PC-9 (cell line): ENCODE measurements at regions of chr2 and their contacts with region 1.

Region 1: GRCh38 chr2:201040867-201041628 is 30.4 kb downstream of the HYCC2 start:
- DNase-seq: no peak
- H3K4me3 ChIP-seq: no peak overlapping the region
- H3K27ac ChIP-seq: no peak overlapping the region
- H3K4me1 ChIP-seq: no peaks in the 10 kb centered on the region
- H3K27me3 ChIP-seq: no peaks in the 10 kb centered on the region
- CTCF ChIP-seq: no peak

Region 2: DNA sequence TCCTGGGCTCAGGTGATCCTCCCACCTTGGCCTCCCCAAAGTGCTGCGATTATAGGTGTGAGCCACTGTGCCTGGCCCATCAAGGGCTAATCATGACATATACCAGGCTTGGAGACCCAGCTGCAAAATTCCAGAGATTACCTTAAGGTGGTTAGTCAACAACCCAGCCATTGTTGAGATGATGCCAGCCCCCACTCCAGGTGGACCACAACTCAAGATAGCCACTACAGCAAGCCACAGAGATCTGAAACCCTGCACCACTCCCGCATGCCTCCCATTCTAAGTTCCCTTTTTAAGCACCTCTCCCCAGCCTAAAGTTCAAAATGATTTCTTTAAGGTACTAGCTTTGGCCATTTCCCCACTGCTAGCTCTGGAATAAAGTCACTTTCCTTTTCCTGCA is 172.0 kb before region 1 on chr2:
- CTCF ChIA-PET with region 1: no interaction called
- POLR2A ChIA-PET with region 1: no interaction called
- intact Hi-C with region 1: no loop called
- DNase-seq: no peak
- H3K4me3 ChIP-seq: no peak overlapping the region
- H3K27ac ChIP-seq: no peak overlapping the region
- H3K4me1 ChIP-seq: no peaks in the 10 kb centered on the region; the same call in 1 of the 2 replicates
- H3K27me3 ChIP-seq: no peaks in the 10 kb centered on the region
- CTCF ChIP-seq: no peak

Region 3: DNA sequence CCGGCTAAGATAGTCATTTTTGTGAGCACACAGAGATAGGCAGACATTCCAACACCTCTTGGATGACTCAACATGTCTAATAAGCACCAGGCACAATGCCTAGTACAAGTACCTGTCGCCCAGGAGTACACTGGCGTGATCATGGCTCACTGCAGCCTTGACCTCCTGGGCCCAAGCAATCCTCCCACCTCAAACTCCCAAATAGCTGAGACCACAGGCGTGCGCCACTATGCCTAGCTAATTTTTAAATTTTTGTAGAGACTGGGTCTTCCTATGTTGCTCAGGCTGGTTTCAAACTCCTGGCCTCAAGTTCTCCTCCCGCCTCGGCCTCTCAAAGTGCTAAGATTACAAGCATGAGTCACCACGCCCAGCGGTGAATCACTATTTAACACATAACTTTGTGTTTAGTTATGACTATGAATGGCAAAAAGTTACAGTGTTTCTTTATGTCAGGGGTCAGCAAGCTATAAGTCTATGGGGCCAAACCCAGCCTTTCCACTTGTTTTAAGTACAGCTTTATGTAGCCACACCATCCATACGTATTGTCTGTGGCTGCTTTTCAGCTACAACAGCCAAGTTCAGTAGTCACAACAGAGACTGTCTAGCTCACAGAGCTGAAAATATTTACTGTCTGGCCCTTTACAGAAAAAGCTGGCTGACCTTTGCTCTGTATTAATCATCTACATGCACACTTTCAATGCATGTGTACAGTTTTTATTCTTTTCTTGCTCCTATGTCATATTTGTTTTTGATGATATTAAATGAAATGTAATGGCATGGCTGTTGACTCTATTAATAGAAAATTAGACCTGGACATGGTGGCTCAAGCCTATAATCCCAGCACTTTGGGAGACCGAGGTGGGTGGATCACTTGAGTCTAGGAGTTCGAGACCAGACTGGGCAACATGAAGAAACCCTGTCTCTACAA is 96.3 kb before region 1 on chr2:
- CTCF ChIA-PET with region 1: interaction called, 10 read pairs
- POLR2A ChIA-PET with region 1: interaction called, 3 read pairs
- intact Hi-C with region 1: no loop called
- DNase-seq: peak; percentile 62 to 92
- H3K4me3 ChIP-seq: no peak overlapping the region
- H3K27ac ChIP-seq: peak overlapping the region; percentile 95
- H3K4me1 ChIP-seq: peaks cover 33% of the 10 kb centered on the region
- H3K27me3 ChIP-seq: no peaks in the 10 kb centered on the region
- CTCF ChIP-seq: no peak